Common myeloid progenitor, CD34-positive (primary cell): ENCODE measurements at regions of chr5 and their contacts with region 1.

Region 1: DNA sequence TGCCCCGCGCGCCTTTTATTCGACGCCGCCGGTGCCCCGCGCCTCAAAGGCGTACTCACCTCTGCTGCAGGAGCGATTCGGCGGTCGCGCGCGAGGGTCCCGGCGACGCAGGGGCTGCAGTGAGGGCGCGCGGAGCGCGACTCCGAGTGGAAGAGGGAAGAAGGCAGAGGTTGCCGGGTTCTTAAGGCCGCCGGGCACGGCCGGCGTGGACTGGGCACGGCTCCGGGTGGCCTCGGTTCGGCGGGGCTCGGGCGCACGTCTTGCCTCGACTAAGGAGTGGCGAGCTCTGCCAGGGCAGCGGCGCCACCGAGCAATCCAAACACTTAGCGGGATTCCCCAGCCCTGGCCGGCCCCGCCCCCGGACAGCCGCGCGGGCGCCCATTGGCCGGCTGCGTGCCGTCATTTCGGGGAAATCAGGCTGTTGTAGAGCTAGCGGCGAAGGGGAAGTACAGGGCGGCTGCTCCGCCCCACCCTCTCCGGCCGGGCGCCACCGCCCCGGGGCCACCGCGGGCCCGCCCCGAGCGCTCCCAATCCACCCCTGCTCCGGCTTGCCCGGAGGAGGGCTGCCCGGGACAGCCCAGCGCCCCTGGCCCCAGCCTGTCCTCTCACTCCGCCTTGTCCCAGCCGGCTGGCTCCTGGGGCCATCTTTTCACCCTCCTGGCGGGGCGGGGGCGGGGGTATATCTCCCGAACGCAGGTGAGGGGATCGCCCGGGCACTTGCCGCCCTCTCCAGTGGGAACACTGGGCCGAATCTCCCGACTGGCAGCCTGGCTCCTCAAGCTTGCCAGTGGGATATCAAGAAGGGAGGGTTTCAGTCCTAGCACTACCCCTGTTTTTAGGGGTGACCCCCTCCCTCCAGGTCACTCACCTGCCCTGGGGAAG is at the start of gene IRF1:
- DNase-seq: peak; percentile 95 to 98 (median 98)
- H3K4me3 ChIP-seq: peak within 1 kb of the TSS; percentile 81 to 98 (median 95)
- H3K27ac ChIP-seq: peak within 1 kb of the TSS; percentile 89 to 95
- H3K4me1 ChIP-seq: peaks cover 24 to 90% (median 79%) of the 10 kb centered on the region in 4 experiments
- H3K27me3 ChIP-seq: no peaks in the 10 kb centered on the region

Region 2: DNA sequence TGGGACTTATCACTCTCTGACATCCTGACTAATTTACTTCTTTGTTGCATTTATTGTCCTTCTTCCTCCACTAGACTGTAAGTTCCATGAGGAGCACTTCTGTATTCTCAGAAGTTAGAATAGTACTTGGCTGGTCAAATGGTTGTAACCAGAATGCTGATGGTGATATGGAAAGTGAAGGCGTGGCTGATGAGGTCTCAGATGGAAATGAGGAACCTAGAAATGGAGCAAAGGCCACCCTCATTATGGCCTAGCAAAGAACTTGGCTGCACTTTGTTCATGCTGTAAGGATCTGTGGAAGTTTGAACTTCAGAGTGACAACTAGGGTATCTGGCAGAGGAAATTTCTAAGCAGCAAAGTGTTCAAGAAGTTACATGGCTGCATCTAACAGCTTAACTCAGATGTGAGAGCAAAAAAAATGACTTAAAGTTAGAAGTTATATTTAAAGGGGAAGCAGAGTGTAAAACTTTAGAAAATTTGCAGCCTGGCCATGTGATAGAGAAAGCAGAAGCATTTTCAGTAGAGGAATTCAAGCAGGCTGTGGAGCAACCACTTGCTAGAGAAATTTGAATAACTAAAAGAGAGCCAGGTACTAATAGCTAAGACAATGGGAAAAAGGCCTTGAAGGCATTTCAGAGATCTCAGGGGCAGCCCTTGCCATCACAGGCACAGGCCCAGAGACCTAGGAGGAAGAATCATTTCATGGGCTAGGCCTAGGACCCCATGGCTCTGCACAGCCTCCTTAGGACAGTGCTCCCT is 136.2 kb before region 1 on chr5:
- CTCF ChIA-PET with region 1: no interaction called
- POLR2A ChIA-PET with region 1: no interaction called
- DNase-seq: peak in 2 of 3 donors; percentile 44 to 60
- H3K4me3 ChIP-seq: no peak overlapping the region
- H3K27ac ChIP-seq: no peak overlapping the region
- H3K4me1 ChIP-seq: peaks cover 0 to 11% (median 3%) of the 10 kb centered on the region in 4 experiments
- H3K27me3 ChIP-seq: no peaks in the 10 kb centered on the region

Region 3: GRCh38 chr5:132386644-132387286 is 104.0 kb before region 1 on chr5:
- CTCF ChIA-PET with region 1: interaction called, 375 read pairs
- POLR2A ChIA-PET with region 1: interaction called, 4 read pairs
- DNase-seq: peak; percentile 74 to 89 (median 87)
- H3K4me3 ChIP-seq: no peak overlapping the region
- H3K27ac ChIP-seq: no peak overlapping the region
- H3K4me1 ChIP-seq: peaks cover 0 to 50% (median 31%) of the 10 kb centered on the region in 4 experiments
- H3K27me3 ChIP-seq: no peaks in the 10 kb centered on the region

Region 4: GRCh38 chr5:132426525-132427138 is 64.1 kb before region 1 on chr5:
- CTCF ChIA-PET with region 1: interaction called, 13 read pairs
- POLR2A ChIA-PET with region 1: interaction called, 29 read pairs
- DNase-seq: peak; percentile 92 to 99 (median 99)
- H3K4me3 ChIP-seq: peak overlapping the region in 2 of 7 experiments; percentile 21 to 34
- H3K27ac ChIP-seq: peak overlapping the region; percentile 82 to 93
- H3K4me1 ChIP-seq: peaks cover 82 to 99% (median 99%) of the 10 kb centered on the region in 4 experiments
- H3K27me3 ChIP-seq: no peaks in the 10 kb centered on the region

Region 5: GRCh38 chr5:132456296-132457001 is 34.3 kb before region 1 on chr5:
- CTCF ChIA-PET with region 1: interaction called, 471 read pairs
- POLR2A ChIA-PET with region 1: interaction called, 10 read pairs
- DNase-seq: peak; percentile 78 to 97 (median 95)
- H3K4me3 ChIP-seq: peak overlapping the region in 6 of 7 experiments; percentile 4 to 49 (median 18)
- H3K27ac ChIP-seq: peak overlapping the region; percentile 89 to 91
- H3K4me1 ChIP-seq: peaks cover 48 to 85% (median 82%) of the 10 kb centered on the region in 4 experiments
- H3K27me3 ChIP-seq: no peaks in the 10 kb centered on the region

Region 6: DNA sequence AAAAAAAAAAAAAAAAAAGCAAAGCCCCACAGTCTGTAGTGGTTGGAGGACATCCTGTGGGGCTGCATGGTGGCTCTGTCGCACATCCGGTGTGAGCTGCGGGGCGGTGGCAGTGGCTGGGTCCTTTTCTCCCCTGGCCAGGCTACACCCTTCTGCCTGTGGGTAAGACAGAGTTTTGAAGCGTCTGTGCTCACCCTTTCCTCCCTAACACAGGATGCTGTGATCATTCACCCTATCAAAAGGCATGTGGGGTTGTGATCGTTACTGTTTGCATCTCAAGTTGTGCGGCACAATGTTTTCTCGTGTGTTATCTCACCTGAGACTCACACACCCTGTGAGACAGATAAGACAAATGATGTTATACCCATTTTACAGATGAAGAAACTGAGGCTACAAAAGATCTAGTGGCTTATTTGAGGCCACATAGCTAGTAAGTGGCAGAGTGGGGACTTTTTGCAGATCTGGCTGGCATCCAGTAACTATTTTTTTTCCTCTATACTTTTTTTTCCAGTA is 17.7 kb before region 1 on chr5:
- CTCF ChIA-PET with region 1: interaction called, 471 read pairs
- POLR2A ChIA-PET with region 1: interaction called, 67 read pairs
- DNase-seq: peak; percentile 78 to 96 (median 91)
- H3K4me3 ChIP-seq: peak overlapping the region in 1 of 7 experiments; percentile 39
- H3K27ac ChIP-seq: no peak overlapping the region
- H3K4me1 ChIP-seq: peaks cover 10 to 80% (median 64%) of the 10 kb centered on the region in 4 experiments
- H3K27me3 ChIP-seq: no peaks in the 10 kb centered on the region